Astrocyte of the cerebellum (primary cell): ENCODE measurements at regions of chr5 and their contacts with region 1.

Region 1: GRCh38 chr5:68994645-68995044 is 99.2 kb upstream of the SLC30A5 start:
- DNase-seq: no peak
- H3K4me3 ChIP-seq: no peak overlapping the region
- CTCF ChIP-seq: no peak

Region 2: DNA sequence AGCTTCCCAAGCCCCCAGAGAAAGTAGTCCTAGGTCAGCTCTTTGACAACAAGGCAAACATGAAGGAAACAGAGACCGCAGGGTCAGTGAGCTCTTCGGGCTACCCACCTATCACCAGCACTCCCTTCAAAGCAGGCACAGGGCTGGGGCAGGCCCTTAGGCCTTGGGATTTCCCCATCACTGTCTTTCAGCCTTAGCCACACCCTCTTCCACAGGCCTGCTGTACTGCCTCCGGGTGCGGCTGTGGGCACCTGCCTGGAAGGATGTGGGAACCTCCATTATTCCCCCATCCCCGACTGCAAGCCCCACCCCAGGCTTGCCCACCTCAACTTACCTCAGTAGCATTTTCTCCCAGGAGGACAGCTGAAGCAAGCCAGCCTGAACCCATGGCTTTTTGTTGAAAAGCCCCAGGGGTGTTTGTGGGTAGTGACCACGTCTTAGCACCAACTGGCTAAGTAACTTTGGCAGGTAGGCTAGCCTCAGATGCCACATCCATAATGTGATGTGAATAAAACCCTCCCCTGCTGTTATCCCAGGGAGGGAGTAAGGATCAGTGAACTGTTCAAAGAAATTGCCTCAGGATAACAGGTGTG is 678.9 kb before region 1 on chr5:
- in situ Hi-C with region 1: loop called (anchors 25 kb)
- DNase-seq: no peak
- H3K4me3 ChIP-seq: no peak overlapping the region
- CTCF ChIP-seq: no peak

Region 3: DNA sequence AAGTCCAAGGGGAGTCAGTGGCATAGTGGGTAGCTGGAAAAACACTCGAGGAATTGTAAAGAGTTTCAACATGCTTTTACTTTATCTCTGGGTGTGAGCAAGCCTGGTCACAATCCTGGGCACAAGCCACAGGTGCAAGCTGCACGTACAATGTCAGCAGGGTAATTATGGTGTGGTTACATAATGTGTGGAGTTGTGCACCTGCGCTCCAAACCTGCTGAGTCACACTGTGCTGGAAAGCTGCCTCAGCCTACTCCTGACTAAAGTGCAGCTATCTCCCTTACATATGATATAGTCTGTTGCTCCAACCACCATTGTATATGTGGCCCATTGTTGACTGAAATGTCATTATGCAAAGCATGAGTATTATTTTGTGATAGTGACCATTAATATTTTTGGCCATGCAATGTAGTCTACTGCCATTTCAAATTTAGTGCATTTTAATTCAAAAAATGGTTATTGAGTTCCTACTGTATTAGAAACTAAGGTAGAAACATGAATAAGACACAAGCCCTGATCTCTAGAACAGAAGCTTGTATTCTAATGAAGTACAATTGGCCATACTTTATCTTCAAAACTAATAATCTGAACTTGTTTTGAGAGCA is 61.7 kb before region 1 on chr5:
- in situ Hi-C with region 1: no loop called
- DNase-seq: no peak
- H3K4me3 ChIP-seq: no peak overlapping the region
- CTCF ChIP-seq: no peak

Region 4: GRCh38 chr5:69032009-69032408 is 37.4 kb after region 1 on chr5:
- in situ Hi-C with region 1: loop called (anchors 5 kb)
- DNase-seq: no peak
- H3K4me3 ChIP-seq: no peak overlapping the region
- CTCF ChIP-seq: peak; percentile 7

Region 5: GRCh38 chr5:69042915-69043658 is 48.4 kb after region 1 on chr5:
- in situ Hi-C with region 1: no loop called
- DNase-seq: peak; percentile 94
- H3K4me3 ChIP-seq: peak overlapping the region; percentile 38
- CTCF ChIP-seq: peak; percentile 61